ENCODE measurements at regions of chr1 and their contacts with region 1.

Region 1: DNA sequence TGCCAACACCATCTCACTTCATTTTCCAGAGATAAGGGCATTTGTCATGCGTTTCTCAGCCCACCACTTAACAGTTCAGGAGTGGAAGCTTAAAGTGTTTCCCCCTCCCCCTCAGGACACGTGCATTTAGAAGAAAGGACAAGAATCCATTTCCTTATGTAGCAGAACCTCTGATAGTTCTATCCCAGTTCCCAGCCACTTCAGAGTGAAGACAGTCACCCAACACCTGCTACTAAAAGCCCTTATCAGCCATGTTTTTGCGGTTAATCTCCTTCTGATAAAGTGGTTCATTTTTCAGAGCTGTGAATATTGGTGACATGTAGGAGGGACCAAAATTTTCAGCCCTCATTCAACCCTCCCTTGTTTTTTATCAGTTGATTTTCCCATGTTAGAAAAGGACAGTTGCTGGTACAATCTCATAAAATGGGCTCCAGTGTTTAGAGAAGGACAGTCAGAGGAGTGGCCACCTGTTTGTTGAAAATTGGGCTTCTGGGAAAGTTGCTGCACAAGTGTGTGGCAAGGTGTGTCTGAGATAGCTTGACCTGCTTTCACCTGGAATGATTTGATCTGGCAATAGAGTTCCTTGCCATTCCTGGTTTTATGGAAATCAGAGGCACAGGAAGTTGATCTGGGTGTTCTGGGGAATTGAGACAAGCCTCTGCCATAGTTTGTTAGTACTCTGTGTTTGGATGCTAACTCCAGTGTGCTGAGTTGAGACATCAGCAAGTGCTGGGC is 114.0 kb downstream of the PPP1R12B start:
- DNase-seq: no peak

Region 2: GRCh38 chr1:202713110-202713509 is 250.6 kb after region 1 on chr1:
- intact Hi-C with region 1: loop called (anchors 5 kb)
- DNase-seq: no peak

Measured in posterior cingulate gyrus (tissue), 11 donors.